Right ventricle myocardium inferior (tissue), 1 donor: ENCODE measurements at regions of chr13 and their contacts with region 1.

Region 1: GRCh38 chr13:40438999-40439797 is 227.2 kb downstream of the FOXO1 start:
- DNase-seq: no peak
- ATAC-seq: peak; percentile 1

Region 2: GRCh38 chr13:40352380-40352778 is 86.8 kb before region 1 on chr13:
- intact Hi-C with region 1: loop called (anchors 5 kb)
- DNase-seq: peak; percentile 69
- ATAC-seq: peak; percentile 91

Region 3: GRCh38 chr13:40394304-40394985 is 44.8 kb before region 1 on chr13:
- intact Hi-C with region 1: no loop called
- DNase-seq: no peak
- ATAC-seq: no peak

Region 4: DNA sequence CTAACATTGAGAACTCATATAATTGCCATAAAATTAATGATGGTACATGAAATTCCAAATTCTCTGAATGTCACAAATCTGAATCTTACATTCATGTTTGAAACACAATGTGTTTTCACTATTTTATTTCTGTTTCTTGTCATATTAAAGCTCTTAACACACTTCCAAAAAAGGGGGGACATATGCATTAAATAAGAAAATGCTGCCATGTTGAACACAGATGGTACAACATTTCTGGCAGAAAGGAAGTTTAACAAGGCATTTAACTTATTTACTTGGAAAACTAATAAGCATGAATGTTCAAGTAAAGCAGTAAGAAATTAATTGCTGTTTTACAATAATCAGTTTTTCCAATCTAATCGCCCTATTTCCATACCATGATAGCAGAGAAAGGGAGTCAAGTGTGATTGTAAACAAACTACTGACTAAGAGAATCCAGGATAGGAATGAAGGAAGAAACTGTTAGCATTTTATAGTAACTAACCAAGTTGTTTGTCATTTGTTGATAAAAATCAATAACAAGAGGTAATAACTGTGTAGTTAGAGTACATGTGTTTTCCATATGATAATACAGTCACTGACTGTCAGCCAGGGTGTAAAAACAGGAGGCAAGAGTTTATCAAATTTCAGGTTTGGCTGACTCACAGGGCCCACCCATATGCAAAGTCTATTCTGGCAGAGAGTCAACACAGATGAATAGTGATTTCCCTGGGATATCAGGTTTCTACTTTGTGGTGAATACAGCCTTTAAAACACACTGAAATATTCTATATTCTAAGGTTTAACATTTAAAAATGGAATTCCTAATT is 233.0 kb after region 1 on chr13:
- intact Hi-C with region 1: no loop called
- DNase-seq: no peak
- ATAC-seq: no peak